ENCODE measurements at regions of chr7 and their contacts with region 1.

Region 1: GRCh38 chr7:150626696-150627095 is 5.5 kb downstream of the GIMAP6 start:
- DNase-seq: no peak
- ATAC-seq: no peak
- H3K4me3 Mint-ChIP-seq: peak overlapping the region; percentile 12 to 72 (median 56)
- H3K27ac Mint-ChIP-seq: peak overlapping the region; percentile 71 to 97 (median 85)
- H3K4me1 Mint-ChIP-seq: peaks cover 32 to 83% (median 76%) of the 10 kb centered on the region in 4 donors
- H3K27me3 Mint-ChIP-seq: no peaks in the 10 kb centered on the region

Region 2: GRCh38 chr7:150538259-150538658 is 88.4 kb before region 1 on chr7:
- POLR2A ChIA-PET with region 1: no interaction called
- DNase-seq: no peak
- ATAC-seq: no peak
- H3K4me3 Mint-ChIP-seq: no peak overlapping the region
- H3K27ac Mint-ChIP-seq: no peak overlapping the region
- H3K4me1 Mint-ChIP-seq: peaks cover 4 to 32% (median 15%) of the 10 kb centered on the region in 4 donors
- H3K27me3 Mint-ChIP-seq: no peaks in the 10 kb centered on the region

Region 3: GRCh38 chr7:150610233-150610632 is 16.5 kb before region 1 on chr7:
- POLR2A ChIA-PET with region 1: interaction called, 11 read pairs
- DNase-seq: no peak
- ATAC-seq: no peak
- H3K4me3 Mint-ChIP-seq: no peak overlapping the region
- H3K27ac Mint-ChIP-seq: peak overlapping the region in 6 of 10 donors; percentile 48 to 92 (median 60)
- H3K4me1 Mint-ChIP-seq: peaks cover 48 to 90% (median 78%) of the 10 kb centered on the region in 4 donors
- H3K27me3 Mint-ChIP-seq: no peaks in the 10 kb centered on the region

Region 4: GRCh38 chr7:151506901-151507382 is 880.2 kb after region 1 on chr7:
- POLR2A ChIA-PET with region 1: no interaction called
- DNase-seq: no peak
- ATAC-seq: no peak
- H3K4me3 Mint-ChIP-seq: no peak overlapping the region
- H3K27ac Mint-ChIP-seq: no peak overlapping the region
- H3K4me1 Mint-ChIP-seq: peaks cover 17 to 85% (median 72%) of the 10 kb centered on the region in 4 donors
- H3K27me3 Mint-ChIP-seq: no peaks in the 10 kb centered on the region